Common myeloid progenitor, CD34-positive (primary cell): ENCODE measurements at regions of chr3 and their contacts with region 1.

Region 1: DNA sequence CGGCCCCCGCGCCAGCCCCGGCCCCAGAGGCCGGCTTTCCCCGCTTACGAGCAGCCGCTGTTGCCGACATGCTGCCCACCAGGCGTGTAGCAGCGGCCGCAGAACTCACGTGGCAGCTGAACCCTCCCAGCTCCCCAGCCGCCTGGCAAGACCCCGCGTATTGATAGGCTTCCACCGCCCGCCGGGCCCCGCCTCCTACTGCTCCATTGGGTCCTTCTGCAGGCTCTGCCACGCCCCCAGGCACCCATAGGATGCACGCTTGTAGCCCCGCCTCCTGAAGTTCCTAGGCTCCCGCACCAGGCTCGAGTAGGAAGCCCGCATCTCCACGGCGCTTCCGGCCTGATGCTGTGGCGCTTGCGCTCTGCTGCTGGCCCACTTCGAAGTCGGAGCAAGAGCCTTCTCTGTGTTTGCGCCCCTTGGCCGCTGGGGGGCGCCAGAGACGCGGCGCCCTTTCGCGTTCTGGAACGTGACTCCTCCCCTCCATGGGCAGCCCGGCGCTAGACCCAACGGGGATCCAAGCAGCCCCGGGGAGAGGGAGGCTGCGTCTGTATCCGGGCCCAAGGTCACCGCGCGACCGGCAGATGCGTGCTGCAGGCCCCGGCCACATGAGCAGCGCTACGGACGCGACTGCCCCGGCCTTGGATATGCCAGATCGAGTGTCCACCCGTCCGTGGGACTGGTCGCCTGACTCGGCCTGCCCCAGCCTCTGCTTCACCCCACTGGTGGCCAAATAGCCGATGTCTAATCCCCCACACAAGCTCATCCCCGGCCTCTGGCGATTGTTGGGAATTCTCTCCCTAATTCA is at the starts of genes PARP3 and RRP9:
- DNase-seq: peak; percentile 100
- H3K4me3 ChIP-seq: peak within 1 kb of the TSS; percentile 54 to 89 (median 80)
- H3K27ac ChIP-seq: peak within 1 kb of the TSS; percentile 15 to 80
- H3K4me1 ChIP-seq: peaks cover 0 to 27% (median 23%) of the 10 kb centered on the region in 4 experiments
- H3K27me3 ChIP-seq: no peaks in the 10 kb centered on the region

Region 2: GRCh38 chr3:51916418-51916817 is 25.6 kb before region 1 on chr3:
- CTCF ChIA-PET with region 1: no interaction called
- POLR2A ChIA-PET with region 1: no interaction called
- DNase-seq: no peak
- H3K4me3 ChIP-seq: no peak overlapping the region
- H3K27ac ChIP-seq: no peak overlapping the region
- H3K4me1 ChIP-seq: no peaks in the 10 kb centered on the region
- H3K27me3 ChIP-seq: peaks cover 0 to 2% (median 0%) of the 10 kb centered on the region in 5 experiments

Region 3: GRCh38 chr3:51955893-51956770 is 14.1 kb after region 1 on chr3:
- CTCF ChIA-PET with region 1: interaction called, 27 read pairs
- POLR2A ChIA-PET with region 1: no interaction called
- DNase-seq: peak; percentile 77 to 82 (median 78)
- H3K4me3 ChIP-seq: peak overlapping the region; percentile 19 to 69 (median 56)
- H3K27ac ChIP-seq: no peak overlapping the region
- H3K4me1 ChIP-seq: peaks cover 0 to 24% (median 19%) of the 10 kb centered on the region in 4 experiments
- H3K27me3 ChIP-seq: peaks cover 0 to 30% (median 24%) of the 10 kb centered on the region in 5 experiments

Region 4: GRCh38 chr3:51967384-51968169 is 25.6 kb after region 1 on chr3 and contains the start of gene PCBP4:
- CTCF ChIA-PET with region 1: interaction called, 18 read pairs
- POLR2A ChIA-PET with region 1: no interaction called
- DNase-seq: peak in 1 of 3 donors; percentile 35
- H3K4me3 ChIP-seq: peak within 1 kb of the TSS in 6 of 7 experiments; percentile 48 to 78 (median 61)
- H3K27ac ChIP-seq: no peak within 1 kb of the TSS
- H3K4me1 ChIP-seq: peaks cover 0 to 17% (median 17%) of the 10 kb centered on the region in 4 experiments
- H3K27me3 ChIP-seq: peaks cover 0 to 20% (median 0%) of the 10 kb centered on the region in 5 experiments

Region 5: GRCh38 chr3:51974963-51975851 is 33.2 kb after region 1 on chr3 and contains the start of gene ABHD14A:
- CTCF ChIA-PET with region 1: interaction called, 18 read pairs
- POLR2A ChIA-PET with region 1: interaction called, 3 read pairs
- DNase-seq: peak; percentile 61 to 70 (median 67)
- H3K4me3 ChIP-seq: peak within 1 kb of the TSS; percentile 65 to 90 (median 84)
- H3K27ac ChIP-seq: peak within 1 kb of the TSS in 1 of 2 experiments; percentile 77
- H3K4me1 ChIP-seq: peaks cover 4 to 38% (median 29%) of the 10 kb centered on the region in 4 experiments
- H3K27me3 ChIP-seq: no peaks in the 10 kb centered on the region